ENCODE measurements at regions of chr1 and their contacts with region 1.

Region 1: GRCh38 chr1:70410604-70411359 is at the start of gene CTH:
- DNase-seq: peak; percentile 98
- total RNA-seq, gene CTH: 0.76 to 2.5 TPM

Region 2: DNA sequence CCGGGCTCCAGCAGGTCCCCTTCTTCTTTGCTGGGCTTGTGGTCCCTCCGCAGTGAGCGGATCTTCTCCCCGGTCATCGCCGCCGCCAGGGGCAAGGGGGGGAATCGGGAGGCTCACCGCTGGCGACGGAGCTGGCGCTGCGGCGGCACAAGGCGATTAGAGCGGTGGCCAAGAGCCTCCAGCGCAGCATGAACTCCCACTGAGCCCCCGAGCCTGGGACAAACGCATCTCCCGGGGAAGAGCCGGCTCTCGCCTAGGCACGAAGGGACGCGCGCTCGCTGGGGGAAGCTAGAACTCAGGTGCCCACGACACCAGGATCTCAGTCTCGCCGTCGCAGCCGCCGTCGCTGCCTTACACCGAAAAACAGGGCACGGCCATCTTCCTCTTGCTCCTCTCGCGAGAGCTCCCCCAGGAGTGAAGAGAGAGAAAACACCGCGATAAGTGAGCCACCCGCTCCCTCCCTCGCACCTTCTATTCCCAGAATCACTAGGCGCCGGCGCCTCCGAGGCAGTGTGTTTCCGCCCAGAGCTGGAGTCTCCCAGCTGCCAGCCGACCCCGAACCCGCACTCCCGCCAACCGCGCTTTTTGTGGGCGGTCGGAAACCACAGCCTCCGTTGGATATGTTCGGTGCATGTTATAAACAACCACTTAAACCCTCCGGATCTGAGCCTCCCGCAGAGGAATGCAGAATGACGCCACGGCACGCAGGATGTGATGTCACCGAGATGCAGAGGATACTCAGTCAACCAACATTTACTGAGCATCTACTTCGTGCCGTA is 56.3 kb before region 1 on chr1 and contains the start of gene ANKRD13C:
- intact Hi-C with region 1: loop called in 1 of 2 experiments (anchors 10 kb)
- DNase-seq: peak; percentile 97
- total RNA-seq, gene ANKRD13C: 20.8 to 23.8 TPM

Region 3: DNA sequence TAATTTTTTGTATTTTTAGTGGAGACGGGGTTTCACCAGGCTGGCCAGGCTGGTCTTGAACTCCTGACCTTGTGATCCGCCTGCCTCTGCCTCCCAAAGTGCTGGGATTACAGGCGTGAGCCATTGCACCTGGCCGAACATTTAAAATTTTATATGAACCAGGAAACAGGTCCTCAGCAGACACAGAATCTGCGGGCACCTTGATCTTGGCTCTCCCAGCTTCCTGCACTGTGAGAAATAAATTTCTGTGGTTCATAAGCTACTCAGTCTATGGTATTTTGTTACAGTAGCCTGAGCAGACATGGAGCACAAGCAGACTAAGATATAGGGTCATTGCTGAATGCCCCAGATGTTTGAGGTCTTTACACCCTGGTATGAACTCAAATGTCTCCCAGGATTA is 23.3 kb before region 1 on chr1:
- intact Hi-C with region 1: no loop called
- DNase-seq: no peak

Region 4: GRCh38 chr1:71948561-71948960 is 1537.8 kb after region 1 on chr1:
- intact Hi-C with region 1: no loop called
- DNase-seq: no peak

Measured in posterior vena cava (tissue), 2 donors.